Mammary epithelial cell (primary cell): ENCODE measurements at regions of chr11 and their contacts with region 1.

Region 1: GRCh38 chr11:69943066-69943465 is 123.8 kb upstream of the FGF3 start:
- DNase-seq: peak; percentile 26
- H3K4me3 ChIP-seq: no peak overlapping the region
- H3K27ac ChIP-seq: no peak overlapping the region
- H3K4me1 ChIP-seq: peaks cover 7% of the 10 kb centered on the region
- H3K27me3 ChIP-seq: no peaks in the 10 kb centered on the region
- CTCF ChIP-seq: peak in 1 of 2 donors; percentile 25

Region 2: DNA sequence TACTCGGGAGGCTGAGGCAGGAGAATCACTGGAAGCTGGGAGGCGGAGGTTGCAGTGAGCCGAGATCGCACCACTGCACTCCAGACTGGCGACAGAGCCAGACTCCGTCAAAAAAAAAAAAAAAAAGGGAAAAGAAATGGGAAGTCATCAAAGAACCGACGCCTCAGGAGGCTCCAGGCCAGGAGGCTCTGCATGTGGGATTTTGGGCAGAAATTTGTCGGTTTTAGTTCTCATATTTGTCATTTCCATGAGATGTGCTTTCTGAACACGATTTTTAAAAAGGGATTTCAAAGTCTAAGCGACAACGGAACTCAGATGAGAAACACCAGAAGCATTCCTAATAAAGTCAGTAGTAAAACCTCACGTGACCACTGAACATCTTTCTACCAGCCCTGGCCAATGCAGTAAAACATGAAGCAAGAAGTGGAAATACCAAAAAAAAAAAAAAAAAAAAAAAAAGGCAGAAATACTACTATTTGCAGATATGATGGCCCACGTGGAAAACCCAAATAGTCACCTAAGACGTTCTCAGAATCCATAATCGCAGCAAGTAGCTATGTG is 267.2 kb before region 1 on chr11:
- CTCF ChIA-PET with region 1: no interaction called
- dilution Hi-C with region 1: loop called (anchors 5 kb)
- in situ Hi-C with region 1: no loop called
- intact Hi-C with region 1: no loop called
- DNase-seq: no peak
- H3K4me3 ChIP-seq: peak overlapping the region; percentile 86 to 96 (median 95)
- H3K27ac ChIP-seq: no peak overlapping the region
- H3K4me1 ChIP-seq: peaks cover 14% of the 10 kb centered on the region
- H3K27me3 ChIP-seq: no peaks in the 10 kb centered on the region
- CTCF ChIP-seq: no peak

Region 3: GRCh38 chr11:69985641-69986439 is 42.8 kb after region 1 on chr11:
- CTCF ChIA-PET with region 1: no interaction called
- dilution Hi-C with region 1: no loop called
- in situ Hi-C with region 1: no loop called
- intact Hi-C with region 1: no loop called
- DNase-seq: no peak
- H3K4me3 ChIP-seq: peak overlapping the region; percentile 55 to 72 (median 67)
- H3K27ac ChIP-seq: peak overlapping the region; percentile 61
- H3K4me1 ChIP-seq: peaks cover 26% of the 10 kb centered on the region
- H3K27me3 ChIP-seq: no peaks in the 10 kb centered on the region
- CTCF ChIP-seq: no peak

Region 4: DNA sequence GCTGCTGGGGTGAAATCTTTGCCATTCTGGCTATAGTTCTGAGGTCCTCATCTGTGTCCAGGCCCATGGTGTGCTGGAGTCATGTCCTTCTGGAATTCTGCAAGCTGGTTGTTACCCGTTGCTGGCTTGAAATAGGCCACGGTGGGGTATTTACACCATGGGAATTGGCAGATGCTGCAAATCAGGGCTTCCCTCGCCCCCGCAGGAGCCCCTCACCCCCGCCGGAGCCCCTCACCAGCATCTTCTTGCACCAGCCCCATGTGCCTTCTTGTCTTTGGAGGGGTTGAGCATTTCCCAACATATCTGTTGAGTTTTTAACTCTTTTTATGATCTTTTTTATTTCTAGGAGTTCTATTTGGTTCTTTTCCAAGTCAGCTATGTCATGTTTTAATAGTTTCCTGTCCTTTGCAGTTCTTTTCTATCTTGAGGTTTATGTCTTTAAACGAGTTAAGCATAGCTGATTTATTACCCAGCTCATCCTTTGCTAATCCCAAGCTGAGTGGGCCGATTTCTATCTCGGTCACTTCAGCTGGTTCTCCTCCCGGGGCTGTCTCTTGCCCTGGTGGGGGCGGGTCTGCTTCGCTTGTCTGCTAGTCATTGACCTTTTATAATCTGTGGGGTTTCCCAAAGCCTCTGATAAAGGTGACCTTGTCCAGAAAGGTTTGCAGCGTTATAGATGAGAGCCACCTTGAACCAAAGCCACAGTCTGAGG is 152.6 kb after region 1 on chr11:
- CTCF ChIA-PET with region 1: no interaction called
- dilution Hi-C with region 1: no loop called
- in situ Hi-C with region 1: no loop called
- intact Hi-C with region 1: no loop called
- DNase-seq: no peak
- H3K4me3 ChIP-seq: no peak overlapping the region
- H3K27ac ChIP-seq: no peak overlapping the region
- H3K4me1 ChIP-seq: peaks cover 11% of the 10 kb centered on the region
- H3K27me3 ChIP-seq: no peaks in the 10 kb centered on the region
- CTCF ChIP-seq: no peak

Region 5: GRCh38 chr11:70352601-70353000 is 409.5 kb after region 1 on chr11:
- CTCF ChIA-PET with region 1: no interaction called
- dilution Hi-C with region 1: loop called (anchors 5 kb)
- in situ Hi-C with region 1: no loop called
- intact Hi-C with region 1: no loop called
- DNase-seq: no peak
- H3K4me3 ChIP-seq: no peak overlapping the region
- H3K27ac ChIP-seq: no peak overlapping the region
- H3K4me1 ChIP-seq: no peaks in the 10 kb centered on the region
- H3K27me3 ChIP-seq: no peaks in the 10 kb centered on the region
- CTCF ChIP-seq: no peak